Posterior vena cava (tissue), 2 donors: ENCODE measurements at regions of chr7 and their contacts with region 1.

Region 1: DNA sequence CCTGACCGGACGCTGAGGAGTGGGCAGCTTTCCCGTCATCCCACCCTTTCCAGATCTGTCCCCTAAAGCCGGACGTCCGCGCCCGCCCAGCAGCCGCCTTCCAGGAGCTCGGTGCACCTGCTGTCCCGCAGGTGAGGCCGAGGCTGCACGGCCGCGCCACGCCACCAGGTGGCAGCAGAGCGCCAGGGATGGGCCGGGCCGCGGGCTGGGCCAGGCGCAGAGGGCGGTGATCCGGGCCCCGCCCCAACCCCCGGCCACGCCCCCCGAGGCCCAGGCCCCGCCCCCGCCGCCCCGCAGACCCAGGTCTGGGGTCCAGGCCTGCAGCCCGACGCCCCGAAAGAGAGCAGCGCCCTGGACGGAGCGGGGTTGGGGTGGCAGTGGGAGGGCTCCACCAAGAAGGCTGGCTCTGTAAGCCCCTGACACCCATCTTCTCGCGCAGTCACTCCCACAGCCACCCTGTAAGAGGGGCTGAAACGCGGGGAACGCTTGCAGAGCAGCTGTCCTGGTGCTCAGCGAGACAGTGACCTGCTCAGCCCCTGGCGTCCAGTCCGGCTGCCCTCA is 32.2 kb downstream of the FOXL3 start:
- DNase-seq: peak; percentile 89

Region 2: GRCh38 chr7:774161-775109 is 452.2 kb after region 1 on chr7:
- intact Hi-C with region 1: loop called (anchors 2 kb)
- DNase-seq: peak; percentile 89

Region 3: GRCh38 chr7:859359-860030 is 537.3 kb after region 1 on chr7:
- intact Hi-C with region 1: loop called in 1 of 2 experiments (anchors 5 kb)
- DNase-seq: no peak